A673 (cell line): ENCODE measurements at regions of chr2 and their contacts with region 1.

Region 1: GRCh38 chr2:151238527-151239487 is 22.9 kb downstream of the RBM43 start:
- DNase-seq: peak; percentile 88
- H3K4me3 ChIP-seq: no peak overlapping the region
- H3K27ac ChIP-seq: no peak overlapping the region
- H3K4me1 ChIP-seq: peaks cover 6% of the 10 kb centered on the region
- H3K27me3 ChIP-seq: no peaks in the 10 kb centered on the region
- CTCF ChIP-seq: peak; percentile 88

Region 2: DNA sequence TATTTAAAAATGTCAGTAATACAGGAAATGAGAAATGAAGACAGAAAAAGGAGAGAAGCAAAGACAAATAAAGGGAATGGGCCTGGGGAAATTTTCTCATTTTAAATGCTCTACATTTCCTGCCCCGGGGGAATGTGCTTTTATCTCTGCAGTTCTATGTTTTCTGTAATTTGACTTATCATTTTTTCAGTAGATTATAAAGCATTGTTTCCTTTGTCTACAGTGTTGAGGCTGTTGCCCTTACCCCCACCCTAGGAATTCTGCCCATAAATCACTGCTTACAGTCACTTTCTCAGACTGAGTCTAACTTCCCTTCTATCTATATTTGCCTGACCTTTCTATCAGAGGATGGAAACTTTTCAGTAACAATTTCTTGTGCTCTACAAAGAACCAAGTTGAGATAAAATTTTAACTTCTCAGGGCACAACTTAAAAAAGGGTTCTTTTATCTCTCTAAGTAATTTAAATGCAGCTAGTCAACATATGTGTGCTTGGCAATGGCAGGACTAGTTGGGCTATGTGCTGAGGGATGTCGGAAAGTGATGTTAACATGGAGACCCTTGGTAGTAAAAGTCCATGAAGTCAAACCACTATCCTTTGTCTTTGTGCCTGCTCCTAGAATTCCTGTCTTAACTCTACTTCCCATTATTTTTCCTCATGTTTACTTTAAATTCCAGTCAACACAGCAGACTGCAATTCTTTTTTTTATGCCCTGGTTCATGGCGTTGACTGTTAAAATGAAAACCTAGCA is 1504.7 kb before region 1 on chr2:
- CTCF ChIA-PET with region 1: no interaction called
- POLR2A ChIA-PET with region 1: no interaction called
- intact Hi-C with region 1: loop called (anchors 1 kb)
- DNase-seq: peak; percentile 96
- H3K4me3 ChIP-seq: no peak overlapping the region
- H3K27ac ChIP-seq: peak overlapping the region; percentile 18
- H3K4me1 ChIP-seq: peaks cover 37% of the 10 kb centered on the region
- H3K27me3 ChIP-seq: no peaks in the 10 kb centered on the region
- CTCF ChIP-seq: no peak

Region 3: DNA sequence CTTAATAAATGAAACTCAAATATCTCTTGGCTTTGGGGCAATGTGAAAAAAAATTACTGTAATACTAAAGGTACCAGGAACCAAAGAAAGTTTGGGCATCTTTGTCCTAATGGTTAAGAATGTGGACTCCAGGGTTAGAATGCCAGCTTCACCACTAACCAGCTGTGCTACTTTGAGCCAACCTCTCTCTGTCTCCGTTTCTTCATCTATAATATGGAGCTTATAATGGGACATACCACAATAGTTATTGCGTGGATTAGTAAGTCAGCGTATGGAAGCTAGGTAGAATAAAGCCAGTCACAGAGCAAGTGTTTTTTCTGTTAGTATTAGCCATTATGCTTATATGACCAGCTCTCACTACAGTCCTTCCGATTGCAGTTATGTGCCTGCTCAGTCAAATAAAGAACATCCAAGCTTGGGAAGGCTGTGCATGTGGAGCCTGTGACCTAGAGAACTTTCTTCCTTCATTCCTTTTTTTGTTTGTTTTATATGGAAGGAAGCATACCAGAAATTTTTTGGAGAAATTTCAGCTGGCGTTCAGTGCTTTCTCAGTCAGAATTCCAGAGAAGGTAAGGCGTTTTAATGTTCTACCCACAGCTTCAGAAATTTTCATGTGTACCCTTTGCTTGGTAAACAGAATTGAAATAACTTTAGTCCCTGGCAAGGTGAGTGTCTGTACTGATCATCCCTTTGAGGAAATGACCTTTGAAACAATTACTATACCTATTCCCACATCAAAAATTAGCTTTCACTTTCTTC is 637.3 kb before region 1 on chr2:
- CTCF ChIA-PET with region 1: no interaction called
- POLR2A ChIA-PET with region 1: no interaction called
- intact Hi-C with region 1: loop called (anchors 10 kb)
- DNase-seq: no peak
- H3K4me3 ChIP-seq: no peak overlapping the region
- H3K27ac ChIP-seq: no peak overlapping the region
- H3K4me1 ChIP-seq: peaks cover 2% of the 10 kb centered on the region
- H3K27me3 ChIP-seq: no peaks in the 10 kb centered on the region
- CTCF ChIP-seq: no peak

Region 4: DNA sequence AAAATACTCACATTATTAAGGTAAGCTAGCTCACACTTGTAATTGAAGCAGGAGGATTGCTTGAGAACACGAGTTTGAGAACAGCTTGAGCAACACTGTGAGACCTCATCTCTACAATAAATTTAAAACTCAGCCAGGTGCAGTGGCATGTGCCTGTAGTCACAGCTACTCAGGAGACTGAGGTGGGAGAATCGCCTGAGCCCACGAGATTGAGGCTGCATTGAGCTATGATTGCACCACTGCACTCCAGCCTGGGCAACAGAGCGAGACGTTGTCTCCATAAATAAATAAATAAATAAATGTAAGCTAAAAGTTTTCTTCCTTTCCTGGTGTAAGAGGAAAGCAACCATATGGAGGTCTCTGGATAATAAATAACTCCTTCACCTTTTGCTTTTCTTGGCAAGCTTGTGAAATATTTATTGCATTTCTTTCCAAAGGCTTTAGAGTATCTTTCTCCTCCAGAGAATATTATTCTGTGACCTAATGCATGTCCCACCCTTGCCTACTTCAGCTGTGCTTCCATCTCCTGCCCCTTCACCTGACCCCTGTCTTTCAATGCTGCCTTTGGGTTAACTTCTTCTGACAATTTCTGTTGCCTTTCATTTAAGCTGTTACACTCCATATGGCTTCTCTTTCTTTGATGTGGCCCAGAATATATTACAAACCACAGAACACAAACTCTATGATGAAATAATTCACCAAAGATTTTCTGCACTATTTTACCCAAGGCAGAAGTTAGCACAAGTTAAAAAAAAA is 470.6 kb before region 1 on chr2:
- CTCF ChIA-PET with region 1: no interaction called
- POLR2A ChIA-PET with region 1: no interaction called
- intact Hi-C with region 1: no loop called
- DNase-seq: no peak
- H3K4me3 ChIP-seq: no peak overlapping the region
- H3K27ac ChIP-seq: no peak overlapping the region
- H3K4me1 ChIP-seq: no peaks in the 10 kb centered on the region
- H3K27me3 ChIP-seq: no peaks in the 10 kb centered on the region
- CTCF ChIP-seq: no peak

Region 5: DNA sequence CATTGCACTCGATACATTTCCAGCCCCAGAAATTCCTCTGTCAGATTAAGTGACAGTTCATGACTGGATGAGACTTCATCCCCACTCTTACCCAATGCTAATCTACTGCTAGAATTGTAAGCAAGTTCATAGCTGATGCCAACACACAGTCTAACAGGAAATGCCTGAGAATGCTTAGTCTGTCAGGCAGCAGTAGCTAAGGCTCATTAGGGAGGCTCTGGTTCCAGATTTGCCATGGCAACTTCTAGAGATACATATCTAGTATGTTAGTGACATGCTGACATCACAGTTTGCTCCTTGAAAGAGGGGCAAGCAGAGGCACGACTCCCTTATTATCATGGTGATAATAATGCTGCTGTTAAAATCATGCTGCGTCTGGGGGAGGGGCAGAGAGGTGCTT is 175.5 kb before region 1 on chr2:
- CTCF ChIA-PET with region 1: no interaction called
- POLR2A ChIA-PET with region 1: no interaction called
- intact Hi-C with region 1: loop called (anchors 5 kb)
- DNase-seq: peak; percentile 97
- H3K4me3 ChIP-seq: no peak overlapping the region
- H3K27ac ChIP-seq: peak overlapping the region; percentile 71
- H3K4me1 ChIP-seq: peaks cover 15% of the 10 kb centered on the region
- H3K27me3 ChIP-seq: no peaks in the 10 kb centered on the region
- CTCF ChIP-seq: no peak

Region 6: GRCh38 chr2:151097128-151097527 is 141.7 kb before region 1 on chr2:
- CTCF ChIA-PET with region 1: no interaction called
- POLR2A ChIA-PET with region 1: no interaction called
- intact Hi-C with region 1: no loop called
- DNase-seq: peak; percentile 34
- H3K4me3 ChIP-seq: no peak overlapping the region
- H3K27ac ChIP-seq: no peak overlapping the region
- H3K4me1 ChIP-seq: peaks cover 12% of the 10 kb centered on the region
- H3K27me3 ChIP-seq: no peaks in the 10 kb centered on the region
- CTCF ChIP-seq: no peak

Region 7: GRCh38 chr2:151207100-151207499 is 31.7 kb before region 1 on chr2:
- CTCF ChIA-PET with region 1: no interaction called
- POLR2A ChIA-PET with region 1: no interaction called
- intact Hi-C with region 1: no loop called
- DNase-seq: no peak
- H3K4me3 ChIP-seq: no peak overlapping the region
- H3K27ac ChIP-seq: no peak overlapping the region
- H3K4me1 ChIP-seq: no peaks in the 10 kb centered on the region
- H3K27me3 ChIP-seq: no peaks in the 10 kb centered on the region
- CTCF ChIP-seq: no peak